Right ventricle myocardium inferior (tissue), 1 donor: ENCODE measurements at regions of chr14 and their contacts with region 1.

Region 1: DNA sequence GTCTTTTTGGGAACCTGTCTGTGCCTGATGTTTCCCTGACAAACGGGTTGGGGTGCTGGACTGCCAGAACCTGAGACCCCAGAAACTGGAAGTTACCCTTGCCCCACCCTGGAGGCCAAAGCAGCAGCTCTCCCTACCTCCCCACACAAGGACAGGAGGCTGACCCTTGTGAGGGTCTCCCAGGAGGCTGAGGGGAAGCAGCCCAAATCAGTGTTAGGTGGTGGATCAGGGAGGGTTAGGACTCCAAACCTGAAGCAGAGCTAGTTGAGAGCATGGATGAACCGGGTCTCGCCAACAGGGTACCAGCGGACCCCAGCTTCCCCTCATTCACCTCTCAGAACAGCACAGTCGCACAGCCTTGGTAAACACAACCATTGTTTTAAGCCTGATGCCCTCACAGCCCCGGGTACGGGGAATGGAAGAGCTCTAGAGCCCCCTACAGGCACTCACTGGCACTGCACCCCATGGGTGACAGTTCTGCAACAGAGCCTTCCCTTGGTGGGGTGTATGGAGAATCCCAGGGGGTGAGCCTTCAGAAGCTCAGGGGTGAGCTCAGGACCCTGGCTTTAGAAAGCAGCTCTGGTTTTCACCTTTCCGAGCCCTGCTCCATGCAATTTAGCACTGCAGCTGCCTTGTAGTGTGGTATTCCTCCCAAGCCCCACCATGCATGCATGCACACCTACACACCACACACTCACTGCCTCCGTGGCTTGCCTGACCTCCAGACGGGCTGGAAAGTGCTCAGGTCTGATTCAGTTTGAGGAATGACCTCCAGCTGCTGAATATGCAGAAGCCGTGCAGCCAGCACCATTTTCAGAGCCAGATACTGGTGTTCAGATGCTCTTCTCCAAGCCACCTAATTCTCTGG is 11.2 kb downstream of the ESRRB start:
- DNase-seq: no peak
- ATAC-seq: peak; percentile 79

Region 2: DNA sequence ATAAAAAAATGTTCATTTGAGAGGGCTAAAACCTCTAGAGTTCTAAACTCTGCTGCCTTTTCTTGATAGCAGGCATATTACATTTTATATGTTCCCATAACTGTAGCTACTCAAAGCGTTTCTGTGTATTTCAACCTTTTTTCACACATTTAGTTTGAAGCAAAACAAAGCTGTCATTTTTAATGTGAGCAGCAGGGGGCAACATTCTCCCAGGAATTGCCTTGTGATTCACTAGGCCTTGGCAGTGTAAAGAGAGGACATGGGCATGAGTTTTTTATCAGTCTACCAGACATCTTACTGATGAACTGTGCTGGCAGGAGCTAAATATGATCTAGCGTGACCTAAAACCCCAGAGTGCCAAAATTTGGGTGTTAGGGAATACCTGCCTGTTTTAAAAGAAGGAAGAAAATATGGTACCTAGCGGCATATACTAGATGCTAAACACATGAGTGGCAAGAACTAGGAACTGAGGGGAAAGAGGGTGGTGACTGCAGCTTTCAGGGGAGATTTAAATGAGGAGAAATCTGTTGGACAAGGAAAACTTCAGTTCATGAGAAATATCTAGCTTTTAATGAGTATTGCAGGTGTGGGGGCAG is 336.3 kb before region 1 on chr14:
- intact Hi-C with region 1: loop called (anchors 1 kb)
- DNase-seq: no peak
- ATAC-seq: peak; percentile 65

Region 3: GRCh38 chr14:76320486-76320885 is 66.7 kb before region 1 on chr14:
- intact Hi-C with region 1: no loop called
- DNase-seq: no peak
- ATAC-seq: no peak